A549 (cell line): ENCODE measurements at regions of chr9 and their contacts with region 1.

Region 1: DNA sequence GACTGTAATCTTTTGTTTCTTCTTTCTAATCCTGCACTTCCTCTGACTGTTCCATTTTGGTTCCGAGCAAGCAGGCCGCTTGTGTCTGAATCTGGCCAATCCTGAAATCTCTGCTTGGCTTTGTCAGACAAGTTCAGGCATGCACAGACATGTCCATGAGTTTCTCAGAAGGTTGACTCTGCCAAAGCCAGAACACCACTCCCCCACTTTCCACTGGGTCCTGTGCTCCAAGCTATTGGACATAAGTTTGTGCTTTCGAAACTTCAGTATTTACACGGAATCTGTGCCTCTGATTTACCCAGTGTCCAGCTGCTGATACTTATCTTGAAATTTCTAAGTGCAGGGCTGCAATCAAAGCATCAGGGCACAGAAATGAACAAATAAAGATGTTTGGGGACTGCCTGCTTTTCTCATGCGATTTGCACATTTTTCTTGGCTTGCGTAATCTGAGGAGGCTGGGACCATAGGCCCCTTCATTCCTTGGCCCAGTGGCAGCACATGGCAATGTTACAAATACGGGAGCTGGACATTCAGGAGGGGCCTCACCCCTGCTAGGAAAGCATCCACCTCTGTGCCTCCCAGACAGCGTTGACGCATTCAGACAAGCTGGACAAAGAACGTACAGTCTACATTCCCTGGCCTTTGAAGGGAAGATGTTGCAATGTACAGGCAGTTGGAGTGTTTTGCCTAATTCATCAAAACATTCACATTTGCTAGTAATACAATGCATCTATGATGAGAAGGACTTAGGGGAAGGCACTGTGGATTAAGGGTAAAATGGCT is 209.2 kb upstream of the PAPPA start:
- DNase-seq: peak; percentile 88 to 100
- ATAC-seq: peak; percentile 96 to 97
- H3K4me3 ChIP-seq: no peak overlapping the region
- H3K27ac ChIP-seq: peak overlapping the region; percentile 95 to 99
- H3K4me1 ChIP-seq: peaks cover 59% of the 10 kb centered on the region
- CTCF ChIP-seq: no peak
- EP300 ChIP-seq: peak; percentile 100
- POLR2A ChIP-seq: no peak
- RAD21 ChIP-seq: peak; percentile 52 to 92

Region 2: GRCh38 chr9:115672477-115673316 is 271.7 kb before region 1 on chr9:
- CTCF ChIA-PET with region 1: interaction called, 17 read pairs
- POLR2A ChIA-PET with region 1: interaction called, 67 read pairs
- DNase-seq: peak; percentile 84 to 96
- ATAC-seq: peak; percentile 89 to 95
- H3K4me3 ChIP-seq: no peak overlapping the region
- H3K27ac ChIP-seq: peak overlapping the region; percentile 91 to 98
- H3K4me1 ChIP-seq: peaks cover 56% of the 10 kb centered on the region
- CTCF ChIP-seq: peak; percentile 12; the same call in 1 of the 3 replicates
- EP300 ChIP-seq: peak; percentile 94 to 96
- POLR2A ChIP-seq: no peak
- RAD21 ChIP-seq: peak; percentile 58 to 66

Region 3: DNA sequence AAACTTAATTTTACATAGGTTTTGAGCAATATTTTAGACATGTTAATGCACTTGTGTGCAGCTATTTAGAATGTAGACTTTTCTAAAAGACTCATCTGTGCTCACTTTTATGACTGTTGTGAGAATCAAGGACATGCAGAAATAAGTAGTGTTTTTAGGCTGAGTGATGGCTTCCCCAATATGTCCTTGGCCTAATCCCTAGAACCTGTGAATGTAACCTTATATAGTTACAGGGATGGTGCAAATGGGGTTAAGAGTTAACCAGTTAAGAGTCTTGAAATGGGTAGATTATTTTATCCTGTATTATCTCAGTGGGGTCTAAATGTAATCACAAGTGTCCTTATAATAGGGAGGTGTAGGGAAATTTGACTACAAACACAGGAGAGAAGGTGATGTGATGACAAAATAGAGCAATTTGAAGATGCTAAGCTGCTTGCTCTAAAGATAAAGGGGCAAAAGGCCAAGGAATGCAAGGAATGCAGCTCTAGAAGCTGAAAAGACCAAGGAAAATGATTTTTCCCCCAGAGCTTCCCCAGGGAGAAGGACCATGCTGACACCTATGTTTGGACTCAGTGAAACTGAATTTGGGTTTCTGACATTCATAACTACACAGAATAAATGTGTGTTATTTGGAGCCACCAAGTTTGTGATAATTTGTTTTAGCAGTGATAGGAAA is 88.8 kb before region 1 on chr9:
- CTCF ChIA-PET with region 1: no interaction called
- POLR2A ChIA-PET with region 1: no interaction called
- DNase-seq: no peak
- ATAC-seq: peak in 1 of 2 experiments; percentile 57; a peak in 2 of 6 replicates
- H3K4me3 ChIP-seq: no peak overlapping the region
- H3K27ac ChIP-seq: peak overlapping the region in 1 of 2 experiments; percentile 63; a peak in 3 of 6 replicates
- H3K4me1 ChIP-seq: peaks cover 8% of the 10 kb centered on the region
- CTCF ChIP-seq: 0 out of 3 replicates have a peak, but pooled peaks have one; percentile 8
- EP300 ChIP-seq: no peak
- POLR2A ChIP-seq: no peak
- RAD21 ChIP-seq: peak; percentile 18 to 25; a peak in 1 of 5 replicates

Region 4: GRCh38 chr9:115923903-115924668 is 20.3 kb before region 1 on chr9:
- CTCF ChIA-PET with region 1: interaction called, 5 read pairs
- POLR2A ChIA-PET with region 1: interaction called, 23 read pairs
- DNase-seq: peak; percentile 67 to 97
- ATAC-seq: peak; percentile 95 to 100
- H3K4me3 ChIP-seq: no peak overlapping the region
- H3K27ac ChIP-seq: peak overlapping the region; percentile 90 to 97
- H3K4me1 ChIP-seq: peaks cover 30% of the 10 kb centered on the region
- CTCF ChIP-seq: no peak
- EP300 ChIP-seq: peak; percentile 98 to 99
- POLR2A ChIP-seq: no peak
- RAD21 ChIP-seq: peak; percentile 36 to 86

Region 5: DNA sequence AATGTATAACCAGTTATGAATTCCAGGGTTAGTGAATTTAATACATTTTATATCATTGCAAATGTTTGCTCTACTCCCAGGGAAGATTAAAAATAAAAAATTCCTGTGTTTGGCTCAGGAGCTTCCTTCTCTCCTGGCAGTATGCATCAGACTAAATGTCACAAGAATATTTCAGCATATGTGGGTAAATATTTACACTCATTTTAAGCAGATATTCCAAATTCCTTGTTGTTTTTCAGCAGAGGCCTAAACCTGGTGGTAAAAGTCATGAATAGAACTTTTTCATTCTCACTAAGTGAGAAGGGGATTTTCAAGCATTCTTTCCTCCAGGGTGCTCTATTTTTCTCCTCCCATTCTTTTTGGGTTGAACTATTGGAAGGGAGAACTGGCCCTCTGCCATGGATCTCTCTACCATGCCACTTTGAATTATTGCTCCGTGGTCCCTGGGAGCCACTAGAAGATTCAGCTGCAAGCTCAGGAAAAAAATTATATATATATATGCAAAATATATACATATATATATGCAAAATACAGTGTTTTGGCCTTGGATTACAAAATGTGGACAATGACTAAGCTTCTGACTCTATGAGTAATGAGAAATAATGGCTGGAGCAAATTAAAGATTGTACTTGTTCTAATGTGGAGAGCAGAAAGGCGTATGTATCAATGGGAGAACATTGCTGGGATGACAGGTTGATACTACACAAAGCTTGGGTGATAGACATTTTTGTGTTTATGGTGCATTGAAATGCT is 28.7 kb after region 1 on chr9:
- CTCF ChIA-PET with region 1: interaction called, 3 read pairs
- POLR2A ChIA-PET with region 1: interaction called, 21 read pairs
- DNase-seq: peak in 1 of 2 experiments; percentile 86
- ATAC-seq: peak; percentile 80 to 88
- H3K4me3 ChIP-seq: no peak overlapping the region
- H3K27ac ChIP-seq: peak overlapping the region; percentile 88 to 89
- H3K4me1 ChIP-seq: peaks cover 45% of the 10 kb centered on the region
- CTCF ChIP-seq: no peak
- EP300 ChIP-seq: peak; percentile 94 to 96
- POLR2A ChIP-seq: no peak
- RAD21 ChIP-seq: peak; percentile 9 to 71; a peak in 3 of 5 replicates

Region 6: GRCh38 chr9:116002624-116003023 is 58.3 kb after region 1 on chr9:
- CTCF ChIA-PET with region 1: no interaction called
- POLR2A ChIA-PET with region 1: no interaction called
- DNase-seq: peak in 1 of 2 experiments; percentile 67
- ATAC-seq: peak; percentile 27 to 44; a peak in 1 of 6 replicates
- H3K4me3 ChIP-seq: no peak overlapping the region
- H3K27ac ChIP-seq: peak overlapping the region; percentile 79 to 81
- H3K4me1 ChIP-seq: peaks cover 47% of the 10 kb centered on the region
- CTCF ChIP-seq: no peak
- EP300 ChIP-seq: no peak
- POLR2A ChIP-seq: no peak
- RAD21 ChIP-seq: no peak

Region 7: DNA sequence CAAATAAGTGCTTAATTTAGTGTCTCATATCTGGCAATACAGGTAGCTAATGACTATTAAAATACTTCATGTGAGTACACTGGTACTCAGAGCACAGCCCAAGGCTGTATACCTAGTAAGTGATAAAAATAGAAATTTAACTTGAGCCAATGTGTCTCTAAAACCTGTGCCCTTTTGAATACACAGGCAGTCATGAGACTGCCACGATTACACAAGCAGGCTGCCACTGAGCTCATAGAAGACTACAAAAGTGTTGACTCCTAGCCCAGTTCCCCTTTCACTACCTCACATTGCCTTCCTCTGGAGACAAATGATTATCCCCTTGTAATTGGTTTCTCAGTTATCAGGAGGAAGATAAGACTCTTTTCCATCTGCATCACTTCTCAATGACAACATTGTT is 142.9 kb after region 1 on chr9:
- CTCF ChIA-PET with region 1: no interaction called
- POLR2A ChIA-PET with region 1: interaction called, 11 read pairs
- DNase-seq: peak; percentile 8 to 71
- ATAC-seq: peak; percentile 79
- H3K4me3 ChIP-seq: no peak overlapping the region
- H3K27ac ChIP-seq: peak overlapping the region; percentile 77 to 84
- H3K4me1 ChIP-seq: peaks cover 28% of the 10 kb centered on the region
- CTCF ChIP-seq: no peak
- EP300 ChIP-seq: no peak
- POLR2A ChIP-seq: no peak
- RAD21 ChIP-seq: no peak

Region 8: DNA sequence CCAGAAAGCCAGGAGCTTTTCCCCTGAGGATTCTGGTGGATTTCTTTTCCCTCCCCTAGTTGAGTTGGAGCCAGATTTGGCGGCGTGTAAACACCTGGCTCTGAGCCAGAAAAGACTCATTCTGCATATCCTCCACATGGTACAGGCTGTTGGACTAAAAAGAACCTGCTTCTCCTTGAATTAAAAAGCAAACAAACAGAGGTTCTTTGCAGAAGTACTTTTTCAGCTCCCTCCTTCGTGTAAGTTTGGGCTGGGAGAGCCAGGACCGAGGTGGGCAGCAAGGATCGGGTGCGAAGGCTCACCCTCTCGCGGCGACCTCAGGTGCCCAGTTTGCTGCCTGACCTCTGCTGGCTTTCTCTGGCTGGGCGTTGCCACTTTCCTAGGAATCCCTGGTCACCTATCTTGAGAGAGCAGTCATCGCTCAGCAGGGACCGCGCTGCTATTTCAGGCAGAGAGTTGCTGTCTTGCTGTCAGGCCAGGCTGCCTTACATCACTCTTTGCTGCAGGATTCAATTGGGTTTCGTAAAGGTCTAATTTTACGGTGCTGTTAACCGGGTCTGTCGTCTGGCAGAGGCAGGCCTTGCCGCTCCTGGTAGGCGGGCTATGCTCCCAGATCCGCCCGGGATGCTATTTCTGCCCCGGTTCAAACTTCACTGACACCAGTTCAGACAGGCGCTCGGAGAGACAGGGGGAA is 212.4 kb after region 1 on chr9:
- CTCF ChIA-PET with region 1: interaction called, 20 read pairs
- POLR2A ChIA-PET with region 1: interaction called, 361 read pairs
- DNase-seq: peak; percentile 72 to 85
- ATAC-seq: peak; percentile 31 to 45; a peak in 5 of 6 replicates
- H3K4me3 ChIP-seq: peak overlapping the region; percentile 87
- H3K27ac ChIP-seq: peak overlapping the region; percentile 99 to 100
- H3K4me1 ChIP-seq: peaks cover 57% of the 10 kb centered on the region
- CTCF ChIP-seq: no peak
- EP300 ChIP-seq: peak in 1 of 2 experiments; percentile 28; a peak in 1 of 5 replicates
- POLR2A ChIP-seq: no peak
- RAD21 ChIP-seq: peak; percentile 8 to 34; a peak in 2 of 5 replicates

Region 9: GRCh38 chr9:116163293-116164055 is 219.1 kb after region 1 on chr9:
- CTCF ChIA-PET with region 1: interaction called, 3 read pairs
- POLR2A ChIA-PET with region 1: interaction called, 361 read pairs
- DNase-seq: no peak
- ATAC-seq: no peak
- H3K4me3 ChIP-seq: no peak overlapping the region
- H3K27ac ChIP-seq: peak overlapping the region; percentile 80 to 99; a peak in 5 of 6 replicates
- H3K4me1 ChIP-seq: peaks cover 100% of the 10 kb centered on the region
- CTCF ChIP-seq: peak; percentile 38; the same call in 2 of the 3 replicates
- EP300 ChIP-seq: no peak
- POLR2A ChIP-seq: no peak
- RAD21 ChIP-seq: peak; percentile 15 to 19; a peak in 1 of 5 replicates